Left cardiac atrium (tissue), 4 donors: ENCODE measurements at regions of chr2 and their contacts with region 1.

Region 1: DNA sequence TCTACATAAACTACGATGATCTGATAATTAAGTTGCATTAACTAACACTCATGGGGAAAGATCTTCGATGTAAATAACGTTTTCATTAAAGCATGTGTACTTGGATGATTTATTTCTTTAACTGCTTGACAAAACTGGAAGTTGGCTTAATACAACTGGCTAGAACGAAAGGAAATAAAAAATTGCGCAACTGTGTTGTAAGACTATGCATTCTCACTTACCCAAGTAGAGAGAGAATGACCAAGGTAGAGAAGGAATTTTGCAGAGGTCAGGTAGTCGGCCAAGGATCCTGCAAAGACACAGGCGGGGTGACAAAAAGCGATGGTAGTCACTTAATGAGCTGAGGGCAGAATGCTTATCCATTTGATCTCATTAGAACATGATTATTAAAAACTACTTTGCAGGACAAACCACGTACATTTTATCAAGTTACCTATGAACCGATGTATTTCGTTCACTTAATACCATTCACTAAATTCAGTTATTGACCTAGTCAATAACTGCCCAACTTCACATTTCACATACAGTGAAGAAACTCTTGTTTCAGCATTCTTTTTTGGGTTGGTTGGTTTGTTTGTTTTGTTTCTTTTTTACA is 897 bp downstream of the SLC40A1 start:
- DNase-seq: no peak
- ATAC-seq: peak in 1 of 2 donors; percentile 41

Region 2: DNA sequence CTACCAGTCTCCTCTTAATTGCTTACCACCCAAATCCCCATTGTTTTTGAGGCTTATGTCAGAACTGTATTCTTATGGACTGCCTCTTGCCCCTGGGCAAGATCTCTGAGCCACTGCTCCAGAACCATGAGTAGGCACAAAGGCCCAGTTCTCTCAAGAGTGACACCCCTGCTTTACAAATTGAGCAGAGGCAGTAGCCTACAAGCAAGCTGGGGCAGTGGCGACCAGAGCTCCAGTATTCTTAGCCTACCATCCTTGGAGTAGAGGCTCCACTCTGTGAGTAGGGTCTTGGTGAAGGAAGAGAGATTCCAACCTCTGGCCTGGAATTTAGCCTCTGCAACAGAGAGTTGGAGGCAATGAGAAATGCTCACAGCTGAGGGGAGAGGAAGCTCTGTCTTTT is 101.9 kb before region 1 on chr2:
- intact Hi-C with region 1: loop called in 1 of 2 experiments (anchors 10 kb)
- DNase-seq: no peak
- ATAC-seq: no peak

Region 3: DNA sequence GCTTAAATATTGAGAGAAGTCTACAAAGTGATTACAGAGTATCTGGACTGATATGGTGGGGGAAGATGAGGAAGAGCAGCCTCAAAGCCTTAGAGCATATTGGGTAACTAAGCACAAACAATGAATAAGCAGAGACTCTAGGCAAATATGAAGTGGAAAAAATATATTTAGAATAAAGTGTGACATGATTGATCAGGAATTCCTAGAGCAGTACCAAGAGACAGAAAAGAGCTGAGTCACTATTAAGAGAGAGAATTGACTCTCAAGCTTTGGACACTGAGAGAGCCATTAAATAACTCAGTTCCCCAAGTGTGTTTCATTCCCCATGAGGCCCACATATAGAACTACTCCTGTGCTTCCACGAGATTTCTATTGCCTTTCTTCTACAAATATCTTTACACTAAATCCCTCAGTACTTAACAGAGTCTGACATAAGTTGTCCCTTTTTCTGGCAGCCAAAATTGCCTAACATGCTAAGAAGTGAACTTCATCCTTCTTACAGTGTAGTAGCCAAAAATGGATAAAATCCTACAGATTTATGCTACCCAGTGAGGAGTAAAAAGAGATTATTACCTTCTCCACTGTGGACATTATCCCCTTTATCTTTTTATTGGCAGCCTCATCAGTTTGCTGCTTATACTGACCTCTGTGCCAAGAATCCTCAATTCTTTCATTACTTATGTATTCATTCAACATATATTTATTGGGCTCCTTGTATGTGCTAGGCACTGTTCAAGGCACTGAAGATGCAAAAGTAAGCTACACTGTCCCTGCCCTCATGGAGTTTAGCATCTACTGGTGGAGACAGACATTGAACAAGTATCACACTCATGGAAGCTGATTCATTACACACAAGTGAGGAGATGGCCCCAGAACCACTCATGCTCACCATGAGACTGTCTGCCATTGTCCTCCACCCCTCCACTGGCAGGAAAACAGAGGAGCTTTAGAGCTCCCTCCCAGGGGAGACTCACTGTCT is 44.5 kb before region 1 on chr2:
- intact Hi-C with region 1: no loop called
- DNase-seq: no peak
- ATAC-seq: peak; percentile 47 to 50

Region 4: GRCh38 chr2:189613077-189613636 is 33.5 kb after region 1 on chr2:
- intact Hi-C with region 1: loop called in 1 of 2 experiments (anchors 5 kb)
- DNase-seq: peak; percentile 32
- ATAC-seq: peak; percentile 95 to 99